Body of pancreas (tissue), 4 donors: ENCODE measurements at regions of chr18 and their contacts with region 1.

Region 1: GRCh38 chr18:50009773-50010335 is 185.1 kb downstream of the MYO5B start:
- DNase-seq: peak; percentile 63 to 74 (median 66)
- ATAC-seq: peak; percentile 88
- H3K4me3 ChIP-seq: no peak overlapping the region
- H3K27ac ChIP-seq: no peak overlapping the region
- H3K4me1 ChIP-seq: peaks cover 5% of the 10 kb centered on the region
- H3K27me3 ChIP-seq: no peaks in the 10 kb centered on the region
- CTCF ChIP-seq: peak; percentile 8 to 74 (median 65)
- POLR2A ChIP-seq: no peak

Region 2: DNA sequence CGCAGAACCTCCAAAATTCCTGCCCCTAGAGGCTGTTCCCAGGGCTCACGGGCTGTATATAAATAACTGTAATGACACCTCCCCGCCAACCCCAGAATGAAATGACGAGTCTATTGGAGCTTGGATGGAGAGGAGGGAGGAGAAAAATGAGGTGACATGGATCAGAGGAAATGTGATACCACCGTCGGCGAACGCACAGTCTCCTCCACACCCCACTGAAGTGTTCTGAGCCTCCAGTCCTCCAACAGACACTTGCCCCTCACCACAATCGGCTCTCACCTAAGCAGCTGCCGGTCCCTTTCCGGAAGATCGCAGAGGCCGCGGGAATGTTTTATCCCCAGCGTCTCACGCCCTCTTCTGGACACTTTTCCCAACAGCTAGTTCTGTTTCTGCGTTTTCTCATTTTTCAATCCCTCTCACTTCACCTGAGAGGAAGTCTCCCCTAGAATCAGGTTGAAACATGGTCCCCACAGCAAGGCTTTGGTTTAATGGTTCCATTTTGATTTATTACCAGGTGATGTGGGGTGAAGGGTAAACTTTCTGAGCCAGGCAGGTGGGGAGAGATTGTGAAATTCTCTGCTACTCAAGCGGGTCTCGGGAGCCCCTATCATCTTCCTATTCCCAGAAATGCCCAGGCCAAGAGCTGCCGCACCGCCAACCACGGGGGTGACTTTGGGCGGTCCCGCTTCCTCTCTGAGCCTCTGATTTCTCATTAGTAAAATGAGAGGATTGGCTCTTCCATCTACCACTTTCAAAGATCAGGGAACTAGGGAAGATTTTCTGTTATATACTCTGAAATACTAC is 194.1 kb after region 1 on chr18:
- intact Hi-C with region 1: loop called (anchors 10 kb)
- DNase-seq: peak; percentile 64 to 73 (median 71)
- ATAC-seq: peak; percentile 80
- H3K4me3 ChIP-seq: no peak overlapping the region
- H3K27ac ChIP-seq: no peak overlapping the region
- H3K4me1 ChIP-seq: no peaks in the 10 kb centered on the region
- H3K27me3 ChIP-seq: no peaks in the 10 kb centered on the region
- CTCF ChIP-seq: peak; percentile 39 to 78 (median 71)
- POLR2A ChIP-seq: no peak

Region 3: DNA sequence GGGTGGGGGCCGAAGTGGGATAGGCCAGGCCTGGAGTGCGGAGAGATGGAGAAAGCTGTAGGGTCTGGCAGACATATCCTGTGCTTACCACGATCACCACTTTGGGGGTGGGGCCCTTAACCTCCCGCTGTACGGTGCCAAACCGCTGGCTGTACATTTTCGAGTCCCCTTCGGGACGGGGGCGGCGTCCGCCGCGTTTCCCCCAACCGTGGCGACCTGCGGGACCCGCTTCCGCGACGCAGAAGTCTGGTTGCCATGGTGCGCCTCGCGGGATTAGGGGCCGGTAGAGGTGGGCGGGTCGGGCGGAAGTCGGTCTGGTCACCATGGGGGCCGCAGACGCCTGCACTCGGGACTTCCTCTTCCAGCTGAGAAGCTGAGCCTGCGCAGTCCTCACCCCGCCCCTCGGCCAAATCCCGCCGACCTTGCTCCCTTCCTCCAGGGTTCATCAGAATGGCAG is 256.4 kb after region 1 on chr18 and contains the start of gene CFAP53:
- intact Hi-C with region 1: no loop called
- DNase-seq: peak; percentile 89 to 94 (median 92)
- ATAC-seq: peak; percentile 97
- H3K4me3 ChIP-seq: peak within 1 kb of the TSS; percentile 15 to 49
- H3K27ac ChIP-seq: peak within 1 kb of the TSS in 1 of 4 donors; percentile 25
- H3K4me1 ChIP-seq: peaks cover 12% of the 10 kb centered on the region
- H3K27me3 ChIP-seq: no peaks in the 10 kb centered on the region
- CTCF ChIP-seq: no peak
- POLR2A ChIP-seq: peak in 2 of 3 donors; percentile 43
- total RNA-seq, gene CFAP53: 0.78 to 1.3 TPM